ENCODE measurements at regions of chr5 and their contacts with region 1.

Region 1: DNA sequence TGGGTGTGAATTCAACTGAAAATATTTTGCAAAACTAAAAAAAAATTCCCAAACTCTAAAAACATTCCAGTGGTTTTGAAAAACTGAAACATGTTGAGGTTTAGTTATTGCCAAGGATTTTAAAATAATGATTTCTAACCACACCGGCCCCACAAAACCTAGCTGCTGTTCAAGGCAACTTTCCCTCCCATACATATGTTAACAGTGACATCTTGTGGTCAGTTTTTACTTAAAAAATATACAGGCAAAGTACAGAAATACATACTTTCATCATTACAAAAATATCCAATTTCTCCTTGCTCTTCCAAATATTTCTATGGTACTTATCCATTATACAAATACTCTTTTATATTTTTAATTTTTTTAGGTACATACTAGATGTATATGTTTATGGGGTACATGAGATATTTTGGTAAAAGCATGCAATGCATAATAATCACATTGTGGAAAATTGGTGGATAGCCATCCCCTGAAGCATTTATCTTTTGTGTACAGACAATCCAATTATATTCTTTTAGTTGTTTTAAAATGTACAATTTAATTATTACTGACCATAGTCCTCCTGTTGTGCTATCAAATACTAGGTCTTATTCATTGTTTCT is 34.4 kb upstream of the MRPS30 start:
- DNase-seq: peak in 2 of 7 donors; percentile 4 to 14
- H3K4me3 ChIP-seq: no peak overlapping the region
- H3K27ac ChIP-seq: no peak overlapping the region
- H3K4me1 ChIP-seq: no peaks in the 10 kb centered on the region
- H3K27me3 ChIP-seq: no peaks in the 10 kb centered on the region
- CTCF ChIP-seq: peak; percentile 35 to 64 (median 54)
- POLR2A ChIP-seq: no peak

Region 2: DNA sequence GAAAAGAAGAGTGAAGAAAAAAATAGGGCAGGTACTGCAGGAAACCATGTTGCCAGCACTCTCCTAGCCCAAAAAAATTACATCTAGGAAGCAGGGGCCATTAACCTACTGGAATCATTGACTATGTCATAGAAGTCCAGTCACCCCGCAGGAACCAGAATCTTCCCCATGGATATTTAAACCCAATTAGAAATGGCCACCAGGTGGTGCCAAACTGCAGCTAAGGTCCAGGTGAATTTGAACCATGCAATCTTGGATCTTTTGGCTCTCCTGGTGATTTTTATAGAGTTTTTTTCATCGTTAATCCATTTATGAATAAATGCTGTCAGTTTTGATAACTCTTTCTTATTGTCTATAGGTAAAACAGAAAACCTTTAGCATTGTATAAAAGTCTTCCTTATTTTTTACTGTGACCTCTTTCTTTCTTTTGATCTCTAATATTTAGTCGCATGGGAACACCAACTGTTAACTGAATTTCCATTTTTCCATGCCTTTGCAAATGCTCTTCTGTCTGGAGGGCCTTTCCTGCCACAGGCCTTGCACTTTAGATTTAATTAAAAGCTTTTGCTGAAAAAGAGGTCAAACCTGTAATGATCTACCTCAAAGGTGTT is 237.6 kb before region 1 on chr5:
- intact Hi-C with region 1: loop called in 1 of 2 experiments (anchors 5 kb)
- DNase-seq: peak; percentile 16 to 64 (median 31)
- H3K4me3 ChIP-seq: no peak overlapping the region
- H3K27ac ChIP-seq: no peak overlapping the region
- H3K4me1 ChIP-seq: no peaks in the 10 kb centered on the region
- H3K27me3 ChIP-seq: no peaks in the 10 kb centered on the region
- CTCF ChIP-seq: peak; percentile 43 to 71 (median 55)
- POLR2A ChIP-seq: no peak

Measured in adrenal gland (tissue), 19 donors.